ENCODE measurements at regions of chr9 and their contacts with region 1.

Region 1: GRCh38 chr9:75775166-75775565 is 115.3 kb upstream of the PCSK5 start:
- DNase-seq: no peak
- ATAC-seq: no peak
- H3K4me3 Mint-ChIP-seq: no peak overlapping the region
- H3K27ac Mint-ChIP-seq: no peak overlapping the region
- H3K4me1 Mint-ChIP-seq: no peaks in the 10 kb centered on the region
- H3K27me3 Mint-ChIP-seq: peaks cover 6% of the 10 kb centered on the region

Region 2: GRCh38 chr9:75728391-75728790 is 46.8 kb before region 1 on chr9:
- CTCF ChIA-PET with region 1: no interaction called
- POLR2A ChIA-PET with region 1: no interaction called
- intact Hi-C with region 1: loop called in 1 of 2 experiments (anchors 5 kb)
- DNase-seq: no peak
- ATAC-seq: no peak
- H3K4me3 Mint-ChIP-seq: no peak overlapping the region
- H3K27ac Mint-ChIP-seq: no peak overlapping the region
- H3K4me1 Mint-ChIP-seq: no peaks in the 10 kb centered on the region
- H3K27me3 Mint-ChIP-seq: peaks cover 4% of the 10 kb centered on the region